PC-3 (cell line): ENCODE measurements at regions of chr6 and their contacts with region 1.

Region 1: DNA sequence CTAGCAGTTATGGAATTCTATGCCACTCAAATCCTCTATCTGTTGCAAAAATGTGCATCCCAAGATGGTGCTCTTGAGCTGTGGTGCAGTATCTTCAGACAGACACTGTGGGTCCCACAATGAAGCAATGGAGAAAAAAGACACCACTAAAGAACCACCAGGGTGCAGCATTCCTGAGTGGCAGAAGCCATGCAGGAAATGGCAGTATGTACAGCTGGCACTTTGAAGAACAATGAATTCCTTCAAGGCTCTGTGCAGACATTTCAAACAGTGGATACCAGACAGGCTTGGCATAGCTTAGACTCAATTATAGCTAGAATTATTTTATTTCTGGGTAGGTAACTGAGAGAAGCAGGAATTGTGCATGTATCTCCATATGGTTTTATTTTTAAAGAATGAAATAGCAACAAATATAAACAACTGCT is 24.0 kb upstream of the HDAC2 start:
- DNase-seq: peak; percentile 90
- ATAC-seq: peak; percentile 82
- H3K4me3 ChIP-seq: no peak overlapping the region
- H3K27ac ChIP-seq: peak overlapping the region; percentile 51
- H3K4me1 ChIP-seq: peaks cover 44% of the 10 kb centered on the region
- H3K27me3 ChIP-seq: no peaks in the 10 kb centered on the region
- CTCF ChIP-seq: peak; percentile 97

Region 2: DNA sequence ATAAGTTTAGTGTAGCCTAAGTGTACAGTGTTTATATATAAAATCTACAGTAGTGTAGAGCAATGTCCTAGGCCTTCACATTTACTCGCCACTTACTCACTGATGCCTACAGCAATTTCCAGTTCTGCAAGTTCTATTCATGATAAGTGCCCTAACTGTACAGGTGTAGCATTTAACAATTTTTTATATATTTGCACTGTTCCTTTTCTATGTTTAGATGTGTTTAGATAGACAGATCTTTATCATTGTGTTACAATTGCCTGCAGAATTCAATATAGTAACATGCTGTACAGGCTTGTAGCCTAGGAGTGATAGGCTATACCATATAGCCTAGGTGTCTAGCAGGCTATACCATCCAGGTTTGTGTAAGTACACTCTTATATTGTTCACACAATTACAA is 56.2 kb after region 1 on chr6:
- CTCF ChIA-PET with region 1: no interaction called
- POLR2A ChIA-PET with region 1: no interaction called
- intact Hi-C with region 1: loop called (anchors 1 kb)
- DNase-seq: peak; percentile 60
- ATAC-seq: peak; percentile 82
- H3K4me3 ChIP-seq: no peak overlapping the region
- H3K27ac ChIP-seq: no peak overlapping the region; the same call in 1 of the 2 replicates
- H3K4me1 ChIP-seq: peaks cover 15% of the 10 kb centered on the region
- H3K27me3 ChIP-seq: no peaks in the 10 kb centered on the region
- CTCF ChIP-seq: no peak

Region 3: DNA sequence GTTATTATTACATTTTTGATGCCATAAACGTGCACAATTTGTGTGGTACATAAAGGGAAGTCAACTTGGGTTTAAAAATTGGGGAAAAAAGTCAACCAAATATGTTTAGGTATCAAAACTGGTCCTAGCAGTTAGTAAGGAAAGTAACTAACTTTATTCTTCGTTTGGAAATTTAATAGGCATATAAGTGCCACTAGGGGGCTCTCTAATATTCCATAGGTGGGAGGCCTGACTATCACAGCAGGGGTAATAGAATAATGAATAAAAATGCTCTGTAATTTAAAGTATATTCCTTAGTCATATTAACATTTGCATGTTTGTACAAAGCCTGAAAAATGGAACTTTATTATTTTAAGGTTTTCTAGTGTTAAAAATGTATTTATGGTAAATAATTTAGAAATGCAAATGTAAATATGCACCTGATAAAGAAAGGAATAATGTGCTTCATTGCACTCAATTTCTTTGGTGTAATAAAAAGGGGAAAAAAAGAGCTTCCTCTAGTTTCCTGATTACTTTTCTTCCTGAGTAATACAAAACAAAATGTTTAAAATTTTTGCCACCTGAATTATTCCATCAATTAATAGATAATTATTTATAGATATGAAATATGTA is 101.7 kb after region 1 on chr6:
- CTCF ChIA-PET with region 1: no interaction called
- POLR2A ChIA-PET with region 1: no interaction called
- intact Hi-C with region 1: loop called (anchors 2 kb)
- DNase-seq: peak; percentile 52
- ATAC-seq: no peak
- H3K4me3 ChIP-seq: no peak overlapping the region
- H3K27ac ChIP-seq: no peak overlapping the region
- H3K4me1 ChIP-seq: no peaks in the 10 kb centered on the region; the same call in 1 of the 2 replicates
- H3K27me3 ChIP-seq: no peaks in the 10 kb centered on the region
- CTCF ChIP-seq: peak; percentile 81

Region 4: GRCh38 chr6:114210467-114210866 is 215.5 kb after region 1 on chr6:
- CTCF ChIA-PET with region 1: no interaction called
- POLR2A ChIA-PET with region 1: no interaction called
- intact Hi-C with region 1: no loop called
- DNase-seq: no peak
- ATAC-seq: no peak
- H3K4me3 ChIP-seq: no peak overlapping the region
- H3K27ac ChIP-seq: no peak overlapping the region
- H3K4me1 ChIP-seq: no peaks in the 10 kb centered on the region
- H3K27me3 ChIP-seq: no peaks in the 10 kb centered on the region
- CTCF ChIP-seq: no peak

Region 5: GRCh38 chr6:114304304-114304887 is 309.5 kb after region 1 on chr6:
- CTCF ChIA-PET with region 1: interaction called, 6 read pairs
- POLR2A ChIA-PET with region 1: no interaction called
- intact Hi-C with region 1: loop called (anchors 1 kb)
- DNase-seq: peak; percentile 64
- ATAC-seq: peak; percentile 59
- H3K4me3 ChIP-seq: no peak overlapping the region
- H3K27ac ChIP-seq: no peak overlapping the region
- H3K4me1 ChIP-seq: no peaks in the 10 kb centered on the region; the same call in 1 of the 2 replicates
- H3K27me3 ChIP-seq: no peaks in the 10 kb centered on the region
- CTCF ChIP-seq: peak; percentile 65

Region 6: GRCh38 chr6:114619621-114620200 is 624.8 kb after region 1 on chr6:
- CTCF ChIA-PET with region 1: no interaction called
- POLR2A ChIA-PET with region 1: no interaction called
- intact Hi-C with region 1: loop called (anchors 1 kb)
- DNase-seq: peak; percentile 70
- ATAC-seq: peak; percentile 89
- H3K4me3 ChIP-seq: no peak overlapping the region
- H3K27ac ChIP-seq: peak overlapping the region; percentile 51
- H3K4me1 ChIP-seq: peaks cover 14% of the 10 kb centered on the region
- H3K27me3 ChIP-seq: no peaks in the 10 kb centered on the region
- CTCF ChIP-seq: no peak

Region 7: GRCh38 chr6:115896538-115897129 is 1901.7 kb after region 1 on chr6:
- CTCF ChIA-PET with region 1: no interaction called
- POLR2A ChIA-PET with region 1: no interaction called
- intact Hi-C with region 1: loop called (anchors 10 kb)
- DNase-seq: peak; percentile 62
- ATAC-seq: 0 out of 2 replicates have a peak, but pooled peaks have one; percentile 24
- H3K4me3 ChIP-seq: no peak overlapping the region
- H3K27ac ChIP-seq: no peak overlapping the region
- H3K4me1 ChIP-seq: peaks cover 11% of the 10 kb centered on the region
- H3K27me3 ChIP-seq: no peaks in the 10 kb centered on the region
- CTCF ChIP-seq: peak; percentile 88